Caco-2 (cell line): ENCODE measurements at regions of chr6 and their contacts with region 1.

Region 1: GRCh38 chr6:139219271-139219729 is 72.5 kb downstream of the TXLNB start:
- DNase-seq: peak; percentile 79 to 85
- H3K4me3 ChIP-seq: no peak overlapping the region
- H3K4me3 Mint-ChIP-seq: peak overlapping the region; percentile 45
- H3K27ac Mint-ChIP-seq: no peak overlapping the region
- H3K4me1 ChIP-seq: no peaks in the 10 kb centered on the region
- H3K4me1 Mint-ChIP-seq: peaks cover 6% of the 10 kb centered on the region
- H3K27me3 ChIP-seq: no peaks in the 10 kb centered on the region
- H3K27me3 Mint-ChIP-seq: peaks cover 4% of the 10 kb centered on the region
- CTCF ChIP-seq: peak; percentile 61 to 88

Region 2: DNA sequence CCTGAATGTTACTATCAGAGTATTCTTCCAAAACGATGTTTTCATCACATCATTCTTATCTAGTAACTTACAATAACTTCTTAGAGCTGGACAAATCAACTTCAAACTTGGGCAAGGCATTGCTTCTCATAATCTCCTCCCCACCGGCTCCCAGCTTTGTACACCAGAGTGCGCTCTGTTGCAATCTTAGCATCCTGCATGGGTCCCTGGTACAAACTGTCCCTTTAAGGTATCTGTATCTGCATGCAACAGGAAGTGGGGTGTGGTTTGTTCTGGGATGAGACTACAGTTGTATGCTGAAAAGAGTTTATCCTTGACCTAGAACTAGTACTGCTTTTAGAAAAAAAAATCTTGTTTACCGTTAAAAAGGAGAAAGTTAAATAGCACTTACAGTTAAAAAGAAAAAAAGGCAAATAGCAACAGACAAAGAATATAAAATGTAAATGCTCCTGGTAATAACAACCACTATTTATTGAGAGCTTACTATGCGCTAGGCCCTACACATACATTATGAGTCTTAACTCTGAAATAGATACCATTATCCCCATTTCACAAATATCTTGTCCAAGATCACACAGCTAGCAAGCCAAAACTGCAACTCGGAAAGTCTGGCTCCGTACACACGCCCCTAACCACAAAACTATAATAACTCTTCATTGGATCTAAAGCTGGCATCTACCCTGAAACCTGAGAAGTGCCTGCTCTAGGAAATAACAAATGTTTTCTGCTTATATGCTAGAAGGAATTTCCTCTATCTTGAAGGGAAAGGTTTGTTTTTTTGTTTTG is 94.2 kb before region 1 on chr6:
- CTCF ChIA-PET with region 1: interaction called, 5 read pairs
- POLR2A ChIA-PET with region 1: no interaction called
- intact Hi-C with region 1: loop called (anchors 1 kb)
- DNase-seq: peak; percentile 59 to 67
- H3K4me3 ChIP-seq: no peak overlapping the region
- H3K4me3 Mint-ChIP-seq: no peak overlapping the region
- H3K27ac Mint-ChIP-seq: no peak overlapping the region
- H3K4me1 ChIP-seq: 0 out of 2 replicates have a peak, but pooled peaks cover 4% of the 10 kb centered on the region
- H3K4me1 Mint-ChIP-seq: no peaks in the 10 kb centered on the region
- H3K27me3 ChIP-seq: no peaks in the 10 kb centered on the region
- H3K27me3 Mint-ChIP-seq: peaks cover 8% of the 10 kb centered on the region
- CTCF ChIP-seq: peak; percentile 35 to 68

Region 3: GRCh38 chr6:139198529-139199288 is 20.6 kb before region 1 on chr6:
- CTCF ChIA-PET with region 1: no interaction called
- POLR2A ChIA-PET with region 1: no interaction called
- intact Hi-C with region 1: no loop called
- DNase-seq: no peak
- H3K4me3 ChIP-seq: no peak overlapping the region
- H3K4me3 Mint-ChIP-seq: no peak overlapping the region
- H3K27ac Mint-ChIP-seq: no peak overlapping the region
- H3K4me1 ChIP-seq: no peaks in the 10 kb centered on the region
- H3K4me1 Mint-ChIP-seq: no peaks in the 10 kb centered on the region
- H3K27me3 ChIP-seq: no peaks in the 10 kb centered on the region
- H3K27me3 Mint-ChIP-seq: peaks cover 3% of the 10 kb centered on the region
- CTCF ChIP-seq: no peak

Region 4: GRCh38 chr6:139230391-139230840 is 11.1 kb after region 1 on chr6:
- CTCF ChIA-PET with region 1: interaction called, 35 read pairs
- POLR2A ChIA-PET with region 1: no interaction called
- intact Hi-C with region 1: no loop called
- DNase-seq: peak; percentile 41 to 53
- H3K4me3 ChIP-seq: no peak overlapping the region
- H3K4me3 Mint-ChIP-seq: no peak overlapping the region
- H3K27ac Mint-ChIP-seq: no peak overlapping the region
- H3K4me1 ChIP-seq: no peaks in the 10 kb centered on the region
- H3K4me1 Mint-ChIP-seq: peaks cover 12% of the 10 kb centered on the region
- H3K27me3 ChIP-seq: no peaks in the 10 kb centered on the region
- H3K27me3 Mint-ChIP-seq: no peaks in the 10 kb centered on the region
- CTCF ChIP-seq: peak in 1 of 2 experiments; percentile 25

Region 5: GRCh38 chr6:139364302-139364981 is 145.1 kb after region 1 on chr6:
- CTCF ChIA-PET with region 1: interaction called, 63 read pairs
- POLR2A ChIA-PET with region 1: interaction called, 3 read pairs
- intact Hi-C with region 1: loop called (anchors 1 kb)
- DNase-seq: peak in 1 of 2 experiments; percentile 47
- H3K4me3 ChIP-seq: no peak overlapping the region
- H3K4me3 Mint-ChIP-seq: no peak overlapping the region
- H3K27ac Mint-ChIP-seq: no peak overlapping the region
- H3K4me1 ChIP-seq: peaks cover 24% of the 10 kb centered on the region
- H3K4me1 Mint-ChIP-seq: peaks cover 12% of the 10 kb centered on the region
- H3K27me3 ChIP-seq: no peaks in the 10 kb centered on the region
- H3K27me3 Mint-ChIP-seq: no peaks in the 10 kb centered on the region
- CTCF ChIP-seq: peak; percentile 34 to 81

Region 6: GRCh38 chr6:139996253-139996834 is 777.0 kb after region 1 on chr6:
- CTCF ChIA-PET with region 1: no interaction called
- POLR2A ChIA-PET with region 1: no interaction called
- intact Hi-C with region 1: loop called (anchors 5 kb)
- DNase-seq: peak; percentile 64 to 71
- H3K4me3 ChIP-seq: no peak overlapping the region
- H3K4me3 Mint-ChIP-seq: no peak overlapping the region
- H3K27ac Mint-ChIP-seq: no peak overlapping the region
- H3K4me1 ChIP-seq: no peaks in the 10 kb centered on the region
- H3K4me1 Mint-ChIP-seq: peaks cover 6% of the 10 kb centered on the region
- H3K27me3 ChIP-seq: no peaks in the 10 kb centered on the region
- H3K27me3 Mint-ChIP-seq: no peaks in the 10 kb centered on the region
- CTCF ChIP-seq: peak; percentile 54 to 55